CD4-positive, alpha-beta memory T cell (primary cell): ENCODE measurements at regions of chr17 and their contacts with region 1.

Region 1: DNA sequence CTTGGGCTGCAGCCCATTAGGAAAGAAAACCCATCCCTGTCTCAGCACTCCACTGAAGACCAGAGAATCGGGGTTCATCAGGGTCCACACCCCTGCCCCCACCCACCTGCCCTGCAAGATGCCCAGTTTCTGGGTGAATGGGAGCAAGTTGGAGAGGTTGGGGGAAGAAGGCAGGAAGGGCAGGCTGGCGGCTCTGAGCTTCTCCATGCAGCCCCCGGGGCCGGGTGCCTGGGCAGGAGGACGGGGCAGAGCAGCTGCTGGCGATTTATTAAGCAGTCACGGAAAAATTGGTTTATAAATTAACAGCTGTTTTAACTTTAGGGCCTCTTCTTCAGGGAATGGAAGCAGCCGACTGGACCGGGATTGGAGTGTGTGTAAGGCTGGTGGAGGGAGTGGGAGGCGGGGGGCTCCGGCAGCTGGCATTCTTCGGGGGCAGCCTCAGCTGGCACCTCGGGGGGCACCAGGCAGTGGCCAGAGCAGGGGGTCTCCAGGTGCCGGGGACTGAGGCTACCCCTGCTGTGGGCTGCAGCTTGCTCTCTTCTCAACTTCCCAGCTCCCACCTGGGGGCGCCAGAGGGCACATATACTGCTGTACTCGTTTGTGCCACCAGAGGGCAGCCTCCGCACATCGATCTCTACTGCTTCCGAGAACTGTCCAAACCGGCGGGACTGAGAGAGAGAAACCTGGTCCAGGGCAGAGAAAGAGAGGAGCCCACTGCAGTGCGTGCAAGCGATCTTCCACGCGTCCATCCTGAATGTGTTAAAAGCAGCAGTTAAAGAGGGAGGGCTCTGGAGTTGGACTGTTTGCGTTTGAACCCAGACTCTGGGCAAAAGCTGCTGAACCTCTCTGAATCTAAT is 5.0 kb upstream of the PPP1R1B start:
- DNase-seq: peak; percentile 82 to 90 (median 84)
- H3K4me3 ChIP-seq: peak overlapping the region in 1 of 2 donors; percentile 50
- H3K4me3 Mint-ChIP-seq: peak overlapping the region; percentile 65 to 85 (median 80)
- H3K27ac ChIP-seq: peak overlapping the region; percentile 4
- H3K27ac Mint-ChIP-seq: peak overlapping the region; percentile 54 to 90 (median 86)
- H3K4me1 ChIP-seq: peaks cover 36% of the 10 kb centered on the region
- H3K4me1 Mint-ChIP-seq: peaks cover 13 to 31% (median 20%) of the 10 kb centered on the region in 4 donors
- H3K27me3 ChIP-seq: peaks cover 14% of the 10 kb centered on the region
- H3K27me3 Mint-ChIP-seq: peaks cover 14 to 18% of the 10 kb centered on the region in 2 donors

Region 2: GRCh38 chr17:39547713-39548478 is 73.9 kb before region 1 on chr17:
- CTCF ChIA-PET with region 1: interaction called, 87 read pairs
- POLR2A ChIA-PET with region 1: interaction called, 7 read pairs
- intact Hi-C with region 1: loop called (anchors 1 kb)
- DNase-seq: peak; percentile 57 to 71 (median 62)
- H3K4me3 ChIP-seq: no peak overlapping the region
- H3K4me3 Mint-ChIP-seq: no peak overlapping the region
- H3K27ac ChIP-seq: no peak overlapping the region
- H3K27ac Mint-ChIP-seq: no peak overlapping the region
- H3K4me1 ChIP-seq: no peaks in the 10 kb centered on the region
- H3K4me1 Mint-ChIP-seq: no peaks in the 10 kb centered on the region
- H3K27me3 ChIP-seq: no peaks in the 10 kb centered on the region
- H3K27me3 Mint-ChIP-seq: no peaks in the 10 kb centered on the region

Region 3: DNA sequence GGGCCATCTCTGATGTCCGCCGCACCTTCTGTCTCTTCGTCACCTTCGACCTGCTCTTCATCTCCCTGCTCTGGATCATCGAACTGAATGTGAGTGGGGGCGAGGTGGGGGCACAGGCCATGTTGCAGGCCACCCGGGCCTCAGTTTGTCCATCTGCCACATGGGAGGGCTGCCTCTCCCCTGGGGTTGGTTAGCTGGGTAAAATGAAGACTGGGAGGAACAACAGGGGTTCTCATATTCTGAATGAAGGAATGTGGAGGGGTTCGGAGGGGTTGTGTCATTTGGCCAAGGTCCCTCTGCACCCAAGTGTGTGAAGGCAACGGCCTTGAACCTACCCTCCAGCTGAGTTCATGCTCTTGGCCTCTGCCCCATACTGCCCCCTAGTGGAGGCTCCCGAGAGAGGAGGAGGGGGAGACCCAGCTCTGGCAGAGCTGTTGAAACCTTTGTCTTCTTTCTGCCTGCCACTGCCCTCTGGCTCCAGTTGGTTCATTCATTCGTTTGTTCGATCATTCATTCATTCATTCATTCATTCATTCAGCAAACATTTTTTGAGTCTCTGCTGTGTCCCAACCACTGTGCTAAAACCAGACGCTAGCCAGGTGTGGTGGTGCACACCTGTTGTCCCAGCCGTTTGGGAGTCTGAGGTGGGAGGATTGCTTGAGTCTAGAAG is 32.0 kb after region 1 on chr17:
- CTCF ChIA-PET with region 1: interaction called, 102 read pairs
- POLR2A ChIA-PET with region 1: interaction called, 3 read pairs
- intact Hi-C with region 1: no loop called
- DNase-seq: peak; percentile 65 to 75 (median 73)
- H3K4me3 ChIP-seq: no peak overlapping the region
- H3K4me3 Mint-ChIP-seq: no peak overlapping the region
- H3K27ac ChIP-seq: no peak overlapping the region
- H3K27ac Mint-ChIP-seq: peak overlapping the region in 3 of 7 donors; percentile 69 to 78 (median 78)
- H3K4me1 ChIP-seq: peaks cover 10% of the 10 kb centered on the region
- H3K4me1 Mint-ChIP-seq: peaks cover 24 to 55% (median 27%) of the 10 kb centered on the region in 4 donors
- H3K27me3 ChIP-seq: no peaks in the 10 kb centered on the region
- H3K27me3 Mint-ChIP-seq: no peaks in the 10 kb centered on the region

Region 4: GRCh38 chr17:39676198-39676819 is 54.6 kb after region 1 on chr17:
- CTCF ChIA-PET with region 1: interaction called, 46 read pairs
- POLR2A ChIA-PET with region 1: interaction called, 3 read pairs
- intact Hi-C with region 1: no loop called
- DNase-seq: peak; percentile 54 to 72 (median 69)
- H3K4me3 ChIP-seq: no peak overlapping the region
- H3K4me3 Mint-ChIP-seq: peak overlapping the region in 7 of 8 donors; percentile 21 to 77 (median 70)
- H3K27ac ChIP-seq: peak overlapping the region; percentile 6
- H3K27ac Mint-ChIP-seq: peak overlapping the region; percentile 77 to 97 (median 92)
- H3K4me1 ChIP-seq: peaks cover 61% of the 10 kb centered on the region
- H3K4me1 Mint-ChIP-seq: peaks cover 44 to 70% (median 58%) of the 10 kb centered on the region in 4 donors
- H3K27me3 ChIP-seq: no peaks in the 10 kb centered on the region
- H3K27me3 Mint-ChIP-seq: no peaks in the 10 kb centered on the region

Region 5: GRCh38 chr17:39777534-39778365 is 156.0 kb after region 1 on chr17:
- CTCF ChIA-PET with region 1: interaction called, 11 read pairs
- POLR2A ChIA-PET with region 1: interaction called, 6 read pairs
- intact Hi-C with region 1: no loop called
- DNase-seq: peak in 4 of 5 donors; percentile 34 to 57 (median 48)
- H3K4me3 ChIP-seq: peak overlapping the region; percentile 64 to 74
- H3K4me3 Mint-ChIP-seq: peak overlapping the region; percentile 93 to 99 (median 96)
- H3K27ac ChIP-seq: peak overlapping the region; percentile 77
- H3K27ac Mint-ChIP-seq: peak overlapping the region; percentile 89 to 98 (median 95)
- H3K4me1 ChIP-seq: peaks cover 84% of the 10 kb centered on the region
- H3K4me1 Mint-ChIP-seq: peaks cover 51 to 88% (median 69%) of the 10 kb centered on the region in 4 donors
- H3K27me3 ChIP-seq: no peaks in the 10 kb centered on the region
- H3K27me3 Mint-ChIP-seq: no peaks in the 10 kb centered on the region

Region 6: GRCh38 chr17:39963829-39964228 is 342.1 kb after region 1 on chr17:
- CTCF ChIA-PET with region 1: interaction called, 8 read pairs
- POLR2A ChIA-PET with region 1: no interaction called
- intact Hi-C with region 1: loop called (anchors 1 kb)
- DNase-seq: peak in 4 of 5 donors; percentile 17 to 51 (median 27)
- H3K4me3 ChIP-seq: no peak overlapping the region
- H3K4me3 Mint-ChIP-seq: peak overlapping the region in 6 of 8 donors; percentile 13 to 83 (median 47)
- H3K27ac ChIP-seq: no peak overlapping the region
- H3K27ac Mint-ChIP-seq: peak overlapping the region in 6 of 7 donors; percentile 38 to 95 (median 81)
- H3K4me1 ChIP-seq: peaks cover 30% of the 10 kb centered on the region
- H3K4me1 Mint-ChIP-seq: peaks cover 19 to 55% (median 35%) of the 10 kb centered on the region in 4 donors
- H3K27me3 ChIP-seq: no peaks in the 10 kb centered on the region
- H3K27me3 Mint-ChIP-seq: peaks cover 2 to 5% of the 10 kb centered on the region in 2 donors